ENCODE measurements at regions of chr3 and their contacts with region 1.

Region 1: GRCh38 chr3:127455541-127456450 is 134.7 kb downstream of the TPRA1 start:
- DNase-seq: peak; percentile 89
- CTCF ChIP-seq: peak; percentile 93

Region 2: DNA sequence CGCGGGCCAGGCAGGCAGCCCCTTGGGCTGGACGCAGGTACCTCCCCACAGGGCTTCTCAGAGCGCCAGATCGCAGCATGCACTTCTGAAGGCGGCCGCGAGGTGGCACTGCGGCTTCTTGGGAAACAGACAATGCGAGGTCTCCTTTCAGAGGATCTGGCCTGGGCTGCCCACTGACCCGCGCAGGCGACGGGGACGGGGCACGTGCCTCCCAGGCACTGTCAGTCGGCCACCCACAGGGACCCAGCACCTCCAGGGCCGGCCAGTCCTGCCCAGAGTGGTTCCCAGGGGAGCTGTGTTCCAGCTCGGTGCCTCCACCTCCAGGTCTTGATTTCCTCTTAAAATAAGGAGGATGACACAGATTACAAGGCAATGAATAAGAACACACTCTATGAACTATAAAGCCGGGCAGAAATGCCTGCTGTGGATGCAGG is 776.5 kb before region 1 on chr3:
- CTCF ChIA-PET with region 1: interaction called, 51 read pairs
- POLR2A ChIA-PET with region 1: no interaction called
- DNase-seq: peak; percentile 85
- CTCF ChIP-seq: peak; percentile 96

Region 3: DNA sequence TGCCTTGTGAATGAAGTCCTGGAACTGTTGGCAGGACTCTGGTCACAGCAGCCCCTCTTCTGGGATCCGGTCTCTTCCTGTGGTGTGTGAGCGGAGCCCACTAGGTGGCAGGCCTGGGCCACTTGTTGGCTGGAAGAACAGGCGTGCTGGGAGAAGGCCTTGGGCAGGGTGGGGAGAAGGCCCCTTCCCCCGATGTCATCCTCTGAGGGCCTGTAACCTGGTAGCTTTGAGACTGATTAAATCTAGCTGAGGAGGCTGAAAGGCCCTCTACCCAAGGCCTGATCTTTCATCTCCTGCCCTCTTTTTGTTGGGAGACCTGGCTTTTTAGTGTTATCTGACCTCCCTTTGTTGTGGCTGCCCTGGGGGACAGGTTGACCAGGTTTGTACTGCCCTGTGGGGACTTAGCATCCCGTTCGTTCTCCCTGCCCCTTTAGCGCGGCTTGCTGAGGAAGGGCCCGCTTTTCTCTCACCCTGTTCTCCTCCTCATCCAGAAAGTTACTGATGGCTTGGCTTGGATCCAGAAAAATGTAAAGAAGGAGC is 703.4 kb before region 1 on chr3:
- CTCF ChIA-PET with region 1: interaction called, 50 read pairs
- POLR2A ChIA-PET with region 1: no interaction called
- DNase-seq: peak; percentile 82
- CTCF ChIP-seq: peak; percentile 95

Region 4: GRCh38 chr3:127424766-127425504 is 30.9 kb before region 1 on chr3:
- CTCF ChIA-PET with region 1: interaction called, 16 read pairs
- POLR2A ChIA-PET with region 1: no interaction called
- DNase-seq: no peak
- CTCF ChIP-seq: no peak

Region 5: DNA sequence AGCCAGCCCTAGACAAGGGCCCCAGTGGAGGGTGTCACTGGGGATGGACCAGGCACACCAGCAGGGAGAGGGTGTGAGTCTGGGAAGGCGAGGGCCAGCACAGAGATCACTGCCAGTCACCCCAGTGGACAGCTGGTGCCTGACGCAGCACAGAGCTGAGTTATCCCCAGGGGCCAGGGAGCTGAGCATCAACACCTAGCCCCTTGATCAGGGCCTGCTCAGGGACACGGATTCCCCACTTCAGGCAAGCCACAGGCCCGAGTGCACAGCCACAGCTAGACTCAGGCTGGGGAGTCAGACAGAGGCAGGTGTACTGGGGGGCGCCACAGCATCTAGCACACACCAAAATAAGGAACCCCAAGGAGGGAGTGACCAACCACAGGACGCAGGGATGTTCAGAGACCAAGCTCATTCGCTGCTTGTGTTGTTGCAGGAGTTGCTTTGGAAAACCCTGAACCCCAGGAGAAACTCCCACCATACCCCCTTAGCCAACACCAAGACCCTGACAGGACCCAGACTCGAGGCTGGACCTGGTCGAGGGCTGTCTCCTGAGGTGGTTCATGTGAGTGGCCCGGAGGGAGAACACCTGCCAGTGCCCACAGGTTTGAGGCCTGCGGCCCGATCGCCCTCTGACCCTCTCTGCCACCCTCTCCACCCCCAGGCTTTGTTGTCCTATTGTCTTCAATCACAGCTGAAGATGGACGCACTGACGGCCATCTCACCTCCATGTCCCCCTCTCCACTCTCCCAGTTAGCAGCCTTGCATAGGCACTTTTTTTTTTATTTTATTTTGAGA is 12.0 kb before region 1 on chr3:
- CTCF ChIA-PET with region 1: interaction called, 10 read pairs
- POLR2A ChIA-PET with region 1: no interaction called
- DNase-seq: no peak
- CTCF ChIP-seq: no peak

Region 6: GRCh38 chr3:127473244-127474024 is 17.6 kb after region 1 on chr3:
- CTCF ChIA-PET with region 1: interaction called, 20 read pairs
- POLR2A ChIA-PET with region 1: no interaction called
- DNase-seq: peak; percentile 52
- CTCF ChIP-seq: peak; percentile 40